Breast epithelium (tissue), 4 donors: ENCODE measurements at regions of chr10 and their contacts with region 1.

Region 1: GRCh38 chr10:81428456-81429134 is 446.4 kb upstream of the NRG3 start:
- DNase-seq: no peak
- H3K4me3 ChIP-seq: no peak overlapping the region
- H3K27ac ChIP-seq: no peak overlapping the region
- H3K4me1 ChIP-seq: no peaks in the 10 kb centered on the region
- H3K27me3 ChIP-seq: no peaks in the 10 kb centered on the region
- CTCF ChIP-seq: no peak
- POLR2A ChIP-seq: no peak

Region 2: DNA sequence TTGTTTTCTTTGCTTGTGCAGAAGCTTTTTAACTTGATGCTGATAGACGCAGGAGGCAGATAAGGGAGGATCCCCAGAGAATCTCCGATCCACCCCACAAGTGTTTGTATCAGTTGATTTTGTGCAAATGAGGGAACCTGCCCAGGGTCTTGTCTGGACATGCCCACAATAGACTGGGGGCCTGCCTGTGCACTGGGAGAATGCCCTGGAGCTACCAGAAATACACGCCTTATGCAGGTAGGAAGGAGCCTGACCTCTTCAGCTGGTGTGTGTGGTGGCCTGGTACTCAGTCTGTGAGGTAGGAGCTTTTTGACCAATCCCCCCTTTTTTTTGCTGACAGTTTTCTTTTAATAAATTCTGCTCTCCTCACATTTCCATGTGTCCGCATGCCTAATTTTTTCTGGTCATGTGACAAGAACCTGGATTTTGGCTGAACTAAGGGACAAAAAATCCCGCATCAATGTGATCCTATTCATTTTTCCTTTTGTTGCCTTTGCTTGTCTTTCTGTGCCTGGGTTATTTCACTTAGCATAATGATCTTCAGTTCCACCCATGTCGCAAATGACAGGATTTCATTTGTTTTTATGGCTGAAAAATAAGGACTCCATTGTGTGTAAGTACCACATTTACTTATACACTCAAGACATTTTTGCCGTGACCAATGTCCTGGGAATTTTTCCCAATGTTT is 15.8 kb after region 1 on chr10:
- intact Hi-C with region 1: loop called (anchors 2 kb)
- DNase-seq: no peak
- H3K4me3 ChIP-seq: no peak overlapping the region
- H3K27ac ChIP-seq: no peak overlapping the region
- H3K4me1 ChIP-seq: no peaks in the 10 kb centered on the region
- H3K27me3 ChIP-seq: no peaks in the 10 kb centered on the region
- CTCF ChIP-seq: no peak
- POLR2A ChIP-seq: no peak